ENCODE measurements at regions of chr3 and their contacts with region 1.

Region 1: GRCh38 chr3:188978421-188979171 is 193.2 kb upstream of the TPRG1 start:
- DNase-seq: peak; percentile 30 to 67 (median 58)
- ATAC-seq: peak; percentile 51 to 61
- H3K4me3 ChIP-seq: no peak overlapping the region
- H3K27ac ChIP-seq: no peak overlapping the region
- H3K4me1 ChIP-seq: peaks cover 3% of the 10 kb centered on the region
- H3K27me3 ChIP-seq: no peaks in the 10 kb centered on the region

Region 2: DNA sequence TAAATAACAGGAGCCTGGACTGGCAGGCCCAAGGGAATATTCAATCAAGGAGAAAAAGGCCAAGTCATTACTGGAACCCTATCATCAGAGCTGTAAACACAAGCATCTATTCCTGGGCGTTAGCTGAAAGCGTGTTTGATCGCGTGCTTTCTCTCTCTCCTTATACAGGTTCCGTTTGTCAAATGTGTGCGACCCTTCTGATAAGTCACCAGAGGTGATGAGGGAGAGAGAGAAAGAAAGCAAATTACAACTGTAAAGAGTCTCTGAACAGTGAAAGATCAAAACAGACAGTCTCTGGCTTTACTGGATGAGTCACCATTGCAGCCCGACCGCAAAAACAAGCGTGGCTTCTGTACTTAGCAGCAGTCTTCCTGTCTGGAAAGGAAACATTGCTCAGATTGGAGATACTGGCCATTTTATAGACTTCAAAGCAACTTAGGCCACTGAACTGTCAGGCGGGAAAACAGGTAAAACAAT is 153.7 kb after region 1 on chr3:
- intact Hi-C with region 1: loop called in 1 of 4 experiments (anchors 10 kb)
- DNase-seq: peak; percentile 45 to 61 (median 53)
- ATAC-seq: peak; percentile 74 to 90
- H3K4me3 ChIP-seq: no peak overlapping the region
- H3K27ac ChIP-seq: no peak overlapping the region
- H3K4me1 ChIP-seq: peaks cover 5% of the 10 kb centered on the region
- H3K27me3 ChIP-seq: no peaks in the 10 kb centered on the region

Region 3: DNA sequence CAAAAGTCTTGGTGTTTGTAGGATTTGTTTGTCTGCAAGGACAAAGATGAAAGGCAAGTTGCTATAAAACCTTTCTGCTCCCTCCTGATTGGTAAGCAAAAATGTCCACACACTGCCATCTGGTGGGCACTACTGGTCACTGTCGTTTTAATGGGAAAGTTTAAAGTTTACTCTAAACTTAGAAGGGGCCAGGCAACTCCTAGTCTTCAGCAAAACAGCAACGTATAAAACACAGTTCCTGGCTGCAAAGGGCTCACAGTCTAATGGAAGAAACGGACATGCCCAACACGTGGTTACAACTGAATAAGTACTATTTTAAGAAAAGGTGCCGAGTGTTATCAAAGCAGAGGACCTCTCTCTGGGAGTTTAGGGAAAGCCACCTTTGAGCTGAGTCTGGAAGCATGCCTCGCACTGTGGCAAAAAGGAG is 169.5 kb after region 1 on chr3:
- intact Hi-C with region 1: loop called in 1 of 4 experiments (anchors 10 kb)
- DNase-seq: peak; percentile 46 to 78 (median 69)
- ATAC-seq: peak; percentile 50 to 73
- H3K4me3 ChIP-seq: no peak overlapping the region
- H3K27ac ChIP-seq: no peak overlapping the region
- H3K4me1 ChIP-seq: no peaks in the 10 kb centered on the region
- H3K27me3 ChIP-seq: no peaks in the 10 kb centered on the region